Ascending aorta (tissue), 2 donors: ENCODE measurements at regions of chr21 and their contacts with region 1.

Region 1: GRCh38 chr21:32612075-32612998 is at the start of gene CFAP298:
- DNase-seq: peak; percentile 37 to 93
- H3K4me3 ChIP-seq: peak within 1 kb of the TSS; percentile 73 to 83
- H3K27ac ChIP-seq: peak within 1 kb of the TSS; percentile 83 to 86
- H3K4me1 ChIP-seq: peaks cover 0 to 11% of the 10 kb centered on the region in 2 donors
- H3K27me3 ChIP-seq: no peaks in the 10 kb centered on the region
- CTCF ChIP-seq: no peak
- total RNA-seq, gene CFAP298: 18.3 TPM

Region 2: GRCh38 chr21:31659536-31660258 is 952.6 kb before region 1 on chr21 and contains the start of gene SOD1:
- intact Hi-C with region 1: loop called (anchors 5 kb)
- DNase-seq: peak; percentile 82 to 97
- H3K4me3 ChIP-seq: peak within 1 kb of the TSS; percentile 73 to 76
- H3K27ac ChIP-seq: peak within 1 kb of the TSS; percentile 89 to 90
- H3K4me1 ChIP-seq: peaks cover 0 to 28% of the 10 kb centered on the region in 2 donors
- H3K27me3 ChIP-seq: no peaks in the 10 kb centered on the region
- CTCF ChIP-seq: no peak
- total RNA-seq, gene SOD1: 87.7 TPM

Region 3: DNA sequence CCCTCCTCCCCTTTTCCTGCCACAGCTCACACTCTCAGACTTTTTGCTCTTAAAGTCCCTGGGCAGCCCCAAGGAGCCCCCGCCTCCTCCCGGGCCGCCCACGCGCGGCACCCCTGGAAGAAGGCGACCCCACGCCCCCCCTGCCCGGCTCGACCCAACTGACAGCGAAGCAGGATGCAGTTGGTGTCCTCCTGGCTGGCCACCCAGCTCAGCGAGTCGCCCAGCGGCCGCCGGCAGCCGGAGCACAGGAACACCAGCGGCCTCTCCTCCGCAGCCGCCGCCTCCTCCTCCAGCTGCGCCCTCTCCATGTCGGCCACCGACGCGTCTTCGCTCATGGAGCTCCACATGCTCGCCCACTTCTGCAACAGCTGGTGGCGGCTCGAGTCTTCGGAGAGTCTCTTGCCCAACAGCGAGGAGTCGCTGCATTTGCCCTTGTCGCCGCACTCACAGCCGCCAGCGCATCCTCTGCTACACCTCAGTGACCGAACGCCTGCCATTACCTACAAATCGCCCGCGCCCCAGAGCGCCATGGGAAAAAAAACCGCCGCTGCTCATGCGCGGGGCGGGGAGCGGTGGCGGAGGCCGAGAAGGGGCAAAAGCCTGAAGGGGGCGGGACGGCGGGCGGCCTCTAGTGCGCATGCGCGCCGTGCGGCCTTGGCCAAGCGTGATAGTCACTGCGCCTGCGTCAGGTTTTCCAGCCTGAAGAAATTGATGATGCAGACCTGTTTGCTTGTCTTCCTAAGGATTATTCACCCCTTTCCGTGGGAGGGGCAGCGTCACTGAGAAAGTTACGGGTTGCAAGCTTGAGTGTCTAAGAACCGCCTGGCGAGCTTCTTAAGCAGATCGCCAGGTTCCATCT is 333.6 kb before region 1 on chr21 and contains the start of gene MIS18A:
- intact Hi-C with region 1: loop called (anchors 2 kb)
- DNase-seq: peak; percentile 80 to 98
- H3K4me3 ChIP-seq: peak within 1 kb of the TSS; percentile 69 to 77
- H3K27ac ChIP-seq: peak within 1 kb of the TSS; percentile 44 to 65
- H3K4me1 ChIP-seq: peaks cover 9 to 13% of the 10 kb centered on the region in 2 donors
- H3K27me3 ChIP-seq: no peaks in the 10 kb centered on the region
- CTCF ChIP-seq: peak in 1 of 3 experiments; percentile 6
- total RNA-seq, gene MIS18A: 0.64 TPM

Region 4: DNA sequence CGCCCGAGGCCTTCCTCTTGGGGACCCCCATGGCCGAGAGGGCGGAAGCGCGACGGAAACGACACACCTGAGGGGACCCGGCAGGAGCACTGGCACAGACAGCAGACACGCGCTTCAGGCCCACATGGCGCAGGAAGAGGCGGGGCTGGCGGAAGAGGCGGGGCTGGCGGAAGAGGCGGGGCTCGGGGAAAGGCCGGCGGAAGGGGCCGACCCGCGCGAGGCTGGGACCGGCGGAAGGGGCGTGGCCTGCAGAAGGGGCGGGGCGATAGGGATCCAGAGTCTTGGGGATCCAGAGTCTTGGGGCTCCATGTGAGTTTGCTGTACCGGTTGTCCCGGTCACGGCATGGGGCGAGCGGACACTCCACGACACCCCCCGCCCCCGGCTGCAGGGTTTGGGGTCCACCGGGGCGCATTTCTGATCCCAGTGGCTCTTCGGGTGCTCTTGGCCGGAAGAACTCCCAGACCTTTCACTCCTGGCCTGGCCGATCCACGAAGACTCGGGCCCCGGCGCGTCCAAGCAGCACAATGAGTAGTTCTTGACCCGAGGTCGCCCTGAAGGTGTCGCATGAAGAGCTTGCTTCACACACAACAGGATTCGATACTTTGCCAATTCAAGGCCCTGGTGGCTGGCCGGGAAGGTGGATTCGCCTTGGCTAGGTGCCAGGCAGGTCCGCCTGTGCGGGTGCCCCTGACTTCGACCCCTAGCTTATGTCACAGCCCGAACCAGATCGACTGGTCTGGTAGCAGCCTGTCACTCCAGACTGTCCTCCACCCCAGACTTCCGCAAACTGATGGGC is 219.3 kb before region 1 on chr21 and contains the start of gene URB1:
- intact Hi-C with region 1: loop called (anchors 5 kb)
- DNase-seq: peak; percentile 59 to 93
- H3K4me3 ChIP-seq: peak within 1 kb of the TSS; percentile 82 to 88
- H3K27ac ChIP-seq: peak within 1 kb of the TSS; percentile 78 to 90
- H3K4me1 ChIP-seq: peaks cover 0 to 11% of the 10 kb centered on the region in 2 donors
- H3K27me3 ChIP-seq: no peaks in the 10 kb centered on the region
- CTCF ChIP-seq: no peak
- total RNA-seq, gene URB1: 35.4 TPM

Region 5: DNA sequence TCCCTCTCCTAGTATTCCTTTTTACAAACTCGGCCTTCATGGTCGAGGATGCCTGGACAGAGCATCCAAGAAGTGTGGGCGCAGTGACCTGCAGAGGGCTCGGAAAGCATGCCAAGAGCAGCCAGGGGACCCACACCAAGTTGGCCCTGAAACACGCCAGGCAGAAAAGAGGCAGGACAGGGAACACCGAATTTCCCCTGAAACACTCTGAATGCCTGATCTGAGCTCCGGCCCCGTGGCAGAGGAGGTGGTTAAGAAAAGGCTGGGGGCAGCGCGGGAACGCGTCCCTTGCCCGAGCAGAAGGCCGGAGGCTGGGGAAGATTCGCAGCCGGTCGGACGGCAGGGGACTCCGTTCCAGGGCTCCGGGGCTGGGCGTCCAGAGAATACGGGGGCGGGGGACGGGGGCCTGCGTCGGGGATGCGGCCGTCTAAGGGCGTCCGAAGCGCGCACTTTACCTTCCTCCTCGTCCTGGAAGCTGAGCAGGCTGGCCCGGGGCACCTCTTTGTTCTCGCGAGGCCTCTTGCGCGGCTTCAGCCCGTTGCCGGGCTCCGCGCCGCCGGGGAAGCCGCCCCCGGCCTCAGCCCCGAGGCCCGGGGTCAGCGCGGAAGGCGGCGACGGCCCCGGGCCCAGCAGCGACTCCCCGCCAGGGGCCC is 158.7 kb after region 1 on chr21:
- intact Hi-C with region 1: loop called (anchors 1 kb)
- DNase-seq: peak in 1 of 2 donors; percentile 77
- H3K4me3 ChIP-seq: peak overlapping the region; percentile 75 to 93
- H3K27ac ChIP-seq: peak overlapping the region; percentile 77 to 93
- H3K4me1 ChIP-seq: peaks cover 3 to 19% of the 10 kb centered on the region in 2 donors
- H3K27me3 ChIP-seq: no peaks in the 10 kb centered on the region
- CTCF ChIP-seq: peak in 1 of 3 experiments; percentile 5